GM12878 (cell line): ENCODE measurements at regions of chr11 and their contacts with region 1.

Region 1: DNA sequence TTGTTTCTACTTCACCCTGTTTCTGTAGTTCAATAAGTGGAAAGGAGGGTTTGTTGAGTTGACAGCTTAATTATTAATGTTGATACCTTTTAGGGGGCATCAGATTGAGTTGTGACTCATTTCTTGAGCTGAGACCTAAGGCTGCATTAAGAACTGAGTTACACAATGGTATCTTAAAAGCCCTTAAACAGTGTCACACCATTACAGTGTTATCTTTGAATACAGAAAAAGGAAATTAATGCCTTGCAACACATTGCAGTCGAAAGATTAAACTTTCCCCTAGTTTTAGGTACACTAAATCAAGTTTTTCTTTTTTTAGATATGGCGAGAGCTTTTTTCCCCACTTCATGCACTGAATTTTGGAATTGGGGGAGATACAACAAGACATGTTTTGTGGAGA is 16.7 kb downstream of the PAFAH1B2 start:
- DNase-seq: no peak
- ATAC-seq: peak; percentile 81
- H3K4me3 ChIP-seq: no peak overlapping the region
- H3K27ac ChIP-seq: 0 out of 2 replicates have a peak overlapping the region, but pooled peaks have one; percentile 11
- H3K4me1 ChIP-seq: peaks cover 13% of the 10 kb centered on the region
- H3K27me3 ChIP-seq: no peaks in the 10 kb centered on the region
- CTCF ChIP-seq: no peak
- EP300 ChIP-seq: no peak
- POLR2A ChIP-seq: no peak
- RAD21 ChIP-seq: no peak

Region 2: GRCh38 chr11:116960930-116961329 is 199.9 kb before region 1 on chr11:
- CTCF ChIA-PET with region 1: no interaction called
- POLR2A ChIA-PET with region 1: no interaction called
- RAD21 ChIA-PET with region 1: no interaction called
- SMC1A ChIA-PET with region 1: no interaction called
- in situ Hi-C with region 1: no loop called
- intact Hi-C with region 1: no loop called
- DNase-seq: no peak
- ATAC-seq: 0 out of 3 replicates have a peak, but pooled peaks have one; percentile 21
- H3K4me3 ChIP-seq: no peak overlapping the region
- H3K27ac ChIP-seq: no peak overlapping the region
- H3K4me1 ChIP-seq: no peaks in the 10 kb centered on the region
- H3K27me3 ChIP-seq: no peaks in the 10 kb centered on the region
- CTCF ChIP-seq: no peak
- EP300 ChIP-seq: no peak
- POLR2A ChIP-seq: no peak
- RAD21 ChIP-seq: no peak

Region 3: DNA sequence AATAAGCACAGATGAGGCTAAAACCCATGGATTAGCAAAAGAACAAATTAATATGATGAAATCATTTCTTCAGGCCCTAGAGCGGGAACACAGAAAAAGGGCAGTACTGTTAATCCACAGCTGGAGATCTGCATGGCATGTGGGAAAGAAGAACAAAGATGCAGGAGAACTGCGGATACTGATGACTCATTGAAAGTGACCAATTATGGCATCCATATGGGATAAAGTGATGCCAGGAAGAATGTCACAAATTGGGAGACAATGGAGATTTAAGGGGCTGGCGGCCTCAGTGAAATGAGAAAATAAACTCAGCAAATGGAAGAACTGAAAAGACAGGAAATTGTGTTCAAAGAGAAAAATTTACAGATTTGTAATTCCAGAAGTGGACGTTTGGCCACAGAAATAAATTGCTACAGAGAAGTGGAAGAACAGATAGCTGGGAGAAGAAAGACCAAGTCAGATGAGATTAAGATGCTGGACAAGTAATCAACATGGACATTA is 102.0 kb before region 1 on chr11:
- CTCF ChIA-PET with region 1: no interaction called
- POLR2A ChIA-PET with region 1: no interaction called
- RAD21 ChIA-PET with region 1: no interaction called
- SMC1A ChIA-PET with region 1: no interaction called
- in situ Hi-C with region 1: no loop called
- intact Hi-C with region 1: no loop called
- DNase-seq: no peak
- ATAC-seq: no peak
- H3K4me3 ChIP-seq: no peak overlapping the region
- H3K27ac ChIP-seq: no peak overlapping the region
- H3K4me1 ChIP-seq: peaks cover 32% of the 10 kb centered on the region
- H3K27me3 ChIP-seq: no peaks in the 10 kb centered on the region
- CTCF ChIP-seq: no peak
- EP300 ChIP-seq: no peak
- POLR2A ChIP-seq: no peak
- RAD21 ChIP-seq: no peak

Region 4: GRCh38 chr11:117143871-117144476 is 16.9 kb before region 1 on chr11 and contains the start of gene PAFAH1B2:
- CTCF ChIA-PET with region 1: interaction called, 4 read pairs
- POLR2A ChIA-PET with region 1: interaction called, 14 read pairs
- RAD21 ChIA-PET with region 1: interaction called, 10 read pairs
- SMC1A ChIA-PET with region 1: interaction called, 55 read pairs
- in situ Hi-C with region 1: no loop called
- intact Hi-C with region 1: no loop called
- DNase-seq: peak; percentile 82
- ATAC-seq: peak; percentile 96
- H3K4me3 ChIP-seq: peak within 1 kb of the TSS; percentile 92
- H3K27ac ChIP-seq: peak within 1 kb of the TSS; percentile 80
- H3K4me1 ChIP-seq: peaks cover 7% of the 10 kb centered on the region
- H3K27me3 ChIP-seq: no peaks in the 10 kb centered on the region
- CTCF ChIP-seq: no peak
- EP300 ChIP-seq: no peak
- POLR2A ChIP-seq: peak; percentile 82
- RAD21 ChIP-seq: no peak
- polyA plus RNA-seq, gene PAFAH1B2: 17.6 to 64.8 TPM

Region 5: GRCh38 chr11:117171404-117172061 is 10.7 kb after region 1 on chr11:
- CTCF ChIA-PET with region 1: interaction called, 8 read pairs
- POLR2A ChIA-PET with region 1: interaction called, 4 read pairs
- RAD21 ChIA-PET with region 1: interaction called, 4 read pairs
- SMC1A ChIA-PET with region 1: interaction called, 14 read pairs
- in situ Hi-C with region 1: no loop called
- intact Hi-C with region 1: no loop called
- DNase-seq: no peak
- ATAC-seq: no peak
- H3K4me3 ChIP-seq: no peak overlapping the region
- H3K27ac ChIP-seq: no peak overlapping the region
- H3K4me1 ChIP-seq: no peaks in the 10 kb centered on the region
- H3K27me3 ChIP-seq: no peaks in the 10 kb centered on the region
- CTCF ChIP-seq: no peak
- EP300 ChIP-seq: no peak
- POLR2A ChIP-seq: 0 out of 2 replicates have a peak, but pooled peaks have one; percentile 43
- RAD21 ChIP-seq: no peak

Region 6: DNA sequence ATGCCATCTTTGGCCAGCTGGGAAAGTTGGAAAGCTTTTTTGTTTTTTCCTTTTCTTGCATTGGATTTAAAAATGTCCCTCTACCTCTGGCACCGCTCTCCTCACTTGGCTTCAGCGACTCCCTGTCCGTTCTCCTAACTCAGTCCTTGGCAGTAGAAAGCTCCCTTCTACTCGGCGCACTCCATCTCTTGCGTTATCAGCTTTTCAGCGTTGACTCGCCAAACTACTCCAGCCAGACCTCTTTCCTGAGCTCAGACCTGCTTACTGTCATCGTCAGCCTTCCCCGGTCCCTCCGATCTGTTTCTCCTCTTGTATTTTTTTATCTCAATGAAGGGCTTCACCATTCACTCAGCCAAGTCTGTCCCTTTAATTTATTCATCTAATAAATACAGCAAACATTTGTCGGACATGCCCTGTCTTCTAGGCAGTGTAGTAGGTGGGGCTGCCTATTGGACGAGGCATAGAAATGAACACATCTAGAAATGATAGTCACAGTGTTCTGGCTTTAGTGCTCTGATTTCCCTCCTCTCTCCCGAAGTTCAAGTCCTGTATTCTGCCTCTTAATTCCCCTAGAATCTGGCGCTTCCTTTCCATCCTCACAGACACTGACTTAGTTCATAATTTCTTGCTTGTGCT is 167.7 kb after region 1 on chr11:
- CTCF ChIA-PET with region 1: no interaction called
- POLR2A ChIA-PET with region 1: no interaction called
- RAD21 ChIA-PET with region 1: no interaction called
- SMC1A ChIA-PET with region 1: no interaction called
- in situ Hi-C with region 1: no loop called
- intact Hi-C with region 1: no loop called
- DNase-seq: no peak
- ATAC-seq: peak; percentile 39
- H3K4me3 ChIP-seq: peak overlapping the region; percentile 82
- H3K27ac ChIP-seq: peak overlapping the region; percentile 39
- H3K4me1 ChIP-seq: no peaks in the 10 kb centered on the region; the same call in 1 of the 2 replicates
- H3K27me3 ChIP-seq: no peaks in the 10 kb centered on the region
- CTCF ChIP-seq: no peak
- EP300 ChIP-seq: no peak
- POLR2A ChIP-seq: no peak
- RAD21 ChIP-seq: no peak